Naive thymus-derived CD4-positive, alpha-beta T cell (primary cell): ENCODE measurements at regions of chr6 and their contacts with region 1.

Region 1: GRCh38 chr6:37698261-37699137 is 816 bp upstream of the MDGA1 start:
- DNase-seq: peak; percentile 33 to 69 (median 57)
- ATAC-seq: peak; percentile 23
- H3K4me3 ChIP-seq: peak overlapping the region; percentile 79
- H3K4me3 Mint-ChIP-seq: peak overlapping the region; percentile 96 to 100 (median 98)
- H3K27ac ChIP-seq: peak overlapping the region; percentile 57
- H3K27ac Mint-ChIP-seq: peak overlapping the region; percentile 93 to 99 (median 98)
- H3K4me1 ChIP-seq: peaks cover 11 to 12% of the 10 kb centered on the region in 2 donors
- H3K4me1 Mint-ChIP-seq: peaks cover 20 to 36% (median 26%) of the 10 kb centered on the region in 7 donors
- H3K27me3 ChIP-seq: no peaks in the 10 kb centered on the region
- H3K27me3 Mint-ChIP-seq: peaks cover 25 to 81% (median 38%) of the 10 kb centered on the region in 5 donors

Region 2: DNA sequence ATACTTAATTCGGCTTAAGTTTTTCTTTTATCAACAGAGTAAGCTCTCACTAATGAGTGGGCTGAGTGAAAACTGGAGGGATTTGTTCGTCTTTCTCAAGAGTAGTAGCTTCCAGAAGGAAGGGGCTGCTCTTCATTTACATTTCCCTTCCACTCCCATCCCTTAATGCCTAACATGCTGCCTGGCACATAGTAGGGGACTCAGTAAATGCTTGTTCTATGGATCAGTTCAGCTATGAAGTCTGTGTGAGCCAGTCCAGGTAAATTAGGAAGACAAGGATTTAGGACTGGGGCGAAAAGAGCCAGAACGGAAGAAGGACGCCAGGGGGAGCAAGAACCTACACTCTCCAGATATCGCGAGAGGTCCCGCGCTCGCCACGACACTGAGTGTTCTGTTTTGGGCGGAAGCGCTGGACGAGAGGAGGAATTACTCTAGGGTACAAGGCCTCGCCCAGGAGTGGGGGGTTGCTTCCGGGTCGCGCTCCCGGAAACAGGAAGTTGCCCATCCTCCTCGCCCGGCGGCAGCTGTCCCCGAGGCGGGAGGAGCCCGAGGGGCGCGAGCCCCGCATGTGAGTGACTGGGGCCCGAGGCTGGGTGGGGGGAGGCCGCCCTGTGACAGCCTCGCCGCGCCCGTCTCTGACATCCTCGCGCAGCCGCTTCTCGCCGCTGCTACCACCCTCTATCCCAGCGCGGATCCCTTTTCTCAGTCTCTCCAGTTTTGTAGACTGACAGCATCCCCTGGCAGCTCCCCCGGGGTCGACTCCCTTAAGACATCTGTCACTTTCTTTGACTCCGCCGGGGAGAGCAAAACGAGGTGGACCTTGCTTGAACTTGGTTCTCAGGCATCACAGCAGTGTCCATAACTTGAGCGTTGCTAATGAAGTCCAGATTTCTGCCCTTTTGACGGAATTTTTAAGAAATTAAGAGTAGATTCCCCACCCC is 812.8 kb before region 1 on chr6 and contains the start of gene C6orf89:
- CTCF ChIA-PET with region 1: no interaction called
- POLR2A ChIA-PET with region 1: no interaction called
- intact Hi-C with region 1: loop called in 1 of 2 experiments (anchors 5 kb)
- DNase-seq: peak; percentile 86 to 98 (median 95)
- ATAC-seq: peak; percentile 100
- H3K4me3 ChIP-seq: peak within 1 kb of the TSS; percentile 96
- H3K4me3 Mint-ChIP-seq: peak within 1 kb of the TSS; percentile 83 to 92 (median 90)
- H3K27ac ChIP-seq: peak within 1 kb of the TSS; percentile 81
- H3K27ac Mint-ChIP-seq: peak within 1 kb of the TSS; percentile 90 to 97 (median 95)
- H3K4me1 ChIP-seq: peaks cover 16 to 24% of the 10 kb centered on the region in 2 donors
- H3K4me1 Mint-ChIP-seq: peaks cover 25 to 47% (median 39%) of the 10 kb centered on the region in 7 donors
- H3K27me3 ChIP-seq: no peaks in the 10 kb centered on the region
- H3K27me3 Mint-ChIP-seq: no peaks in the 10 kb centered on the region
- total RNA-seq, gene C6orf89: 34.6 to 48.2 (median 47.7) TPM

Region 3: DNA sequence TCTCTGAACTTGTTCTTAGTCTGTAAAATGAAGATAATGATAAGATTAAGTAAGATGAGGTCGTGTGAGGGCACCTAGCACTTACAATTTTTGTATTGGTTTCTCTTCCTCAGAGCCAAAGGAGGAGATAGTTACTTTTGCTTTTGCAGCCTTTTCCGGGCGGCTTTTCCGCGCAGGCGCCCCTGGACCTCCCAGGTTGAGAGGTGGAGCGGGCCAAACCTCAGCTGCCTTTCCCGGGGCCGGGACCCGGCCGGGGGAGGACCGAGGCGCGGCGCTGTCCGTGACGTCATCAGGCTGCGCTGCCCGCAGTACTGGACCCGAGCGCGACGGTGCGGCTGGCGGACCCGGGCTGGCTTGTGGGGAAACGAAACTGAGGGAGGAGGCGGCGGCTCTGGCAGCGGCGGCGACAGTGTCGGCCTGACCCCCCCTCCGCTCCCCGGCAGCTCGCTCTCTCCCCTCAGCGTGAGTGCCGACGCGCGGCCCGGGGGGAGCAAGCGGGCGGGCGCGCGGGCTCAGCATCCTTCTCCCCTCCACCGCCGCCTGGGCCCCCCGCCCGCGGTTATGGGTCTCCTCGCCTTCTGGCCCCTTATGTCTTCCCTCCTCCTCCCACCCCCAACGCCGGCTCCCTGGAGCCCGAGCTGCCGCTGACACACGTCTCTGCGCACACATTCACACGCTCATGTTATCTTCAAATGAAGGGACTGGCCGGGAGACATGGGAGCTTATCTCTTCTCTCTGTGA is 265.4 kb before region 1 on chr6 and contains the start of gene CMTR1:
- CTCF ChIA-PET with region 1: no interaction called
- POLR2A ChIA-PET with region 1: interaction called, 10 read pairs
- intact Hi-C with region 1: loop called (anchors 2 kb)
- DNase-seq: peak; percentile 94 to 99 (median 95)
- ATAC-seq: peak; percentile 96
- H3K4me3 ChIP-seq: peak within 1 kb of the TSS; percentile 64
- H3K4me3 Mint-ChIP-seq: peak within 1 kb of the TSS; percentile 83 to 96 (median 94)
- H3K27ac ChIP-seq: peak within 1 kb of the TSS; percentile 94
- H3K27ac Mint-ChIP-seq: peak within 1 kb of the TSS; percentile 92 to 97 (median 96)
- H3K4me1 ChIP-seq: peaks cover 12 to 25% of the 10 kb centered on the region in 2 donors
- H3K4me1 Mint-ChIP-seq: peaks cover 24 to 55% (median 47%) of the 10 kb centered on the region in 7 donors
- H3K27me3 ChIP-seq: no peaks in the 10 kb centered on the region
- H3K27me3 Mint-ChIP-seq: peaks cover 2 to 9% (median 8%) of the 10 kb centered on the region in 5 donors
- total RNA-seq, gene CMTR1: 70.0 to 89.4 (median 71.8) TPM

Region 4: GRCh38 chr6:37819177-37819823 is 120.8 kb after region 1 on chr6 and contains the start of gene ZFAND3:
- CTCF ChIA-PET with region 1: no interaction called
- POLR2A ChIA-PET with region 1: interaction called, 14 read pairs
- intact Hi-C with region 1: loop called (anchors 1 to 2 kb)
- DNase-seq: peak; percentile 87 to 96 (median 95)
- ATAC-seq: peak; percentile 90
- H3K4me3 ChIP-seq: peak within 1 kb of the TSS; percentile 85
- H3K4me3 Mint-ChIP-seq: peak within 1 kb of the TSS; percentile 90 to 100 (median 96)
- H3K27ac ChIP-seq: peak within 1 kb of the TSS; percentile 93
- H3K27ac Mint-ChIP-seq: peak within 1 kb of the TSS; percentile 94 to 99 (median 98)
- H3K4me1 ChIP-seq: peaks cover 30 to 31% of the 10 kb centered on the region in 2 donors
- H3K4me1 Mint-ChIP-seq: peaks cover 39 to 66% (median 55%) of the 10 kb centered on the region in 7 donors
- H3K27me3 ChIP-seq: no peaks in the 10 kb centered on the region
- H3K27me3 Mint-ChIP-seq: peaks cover 0 to 29% (median 0%) of the 10 kb centered on the region in 5 donors
- total RNA-seq, gene ZFAND3: 31.7 to 55.0 (median 42.5) TPM

Region 5: DNA sequence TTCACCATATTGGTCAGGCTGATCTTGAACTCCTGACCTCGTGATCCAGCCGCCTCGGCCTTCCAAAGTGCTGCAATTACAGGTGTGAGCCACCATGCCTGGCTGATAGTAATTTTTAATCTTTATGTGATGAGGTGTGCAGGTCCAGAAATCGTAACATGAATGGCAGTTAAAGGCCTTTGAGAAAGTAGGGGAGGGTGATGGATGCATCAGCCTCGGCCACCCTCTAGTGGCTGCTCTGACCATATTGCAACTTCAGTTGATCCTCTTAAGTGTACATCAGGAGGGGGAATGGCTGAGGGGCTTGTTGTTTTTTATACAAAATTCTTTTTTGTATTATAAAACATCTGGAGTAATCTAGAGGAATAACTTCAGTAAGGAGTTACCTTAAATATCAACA is 314.1 kb after region 1 on chr6:
- CTCF ChIA-PET with region 1: no interaction called
- POLR2A ChIA-PET with region 1: no interaction called
- intact Hi-C with region 1: loop called in 1 of 2 experiments (anchors 2 kb)
- DNase-seq: peak in 4 of 9 donors; percentile 3 to 15 (median 12)
- ATAC-seq: peak; percentile 61
- H3K4me3 ChIP-seq: no peak overlapping the region
- H3K4me3 Mint-ChIP-seq: no peak overlapping the region
- H3K27ac ChIP-seq: no peak overlapping the region
- H3K27ac Mint-ChIP-seq: no peak overlapping the region
- H3K4me1 ChIP-seq: no peaks in the 10 kb centered on the region
- H3K4me1 Mint-ChIP-seq: peaks cover 9 to 50% (median 25%) of the 10 kb centered on the region in 7 donors
- H3K27me3 ChIP-seq: no peaks in the 10 kb centered on the region
- H3K27me3 Mint-ChIP-seq: no peaks in the 10 kb centered on the region

Region 6: DNA sequence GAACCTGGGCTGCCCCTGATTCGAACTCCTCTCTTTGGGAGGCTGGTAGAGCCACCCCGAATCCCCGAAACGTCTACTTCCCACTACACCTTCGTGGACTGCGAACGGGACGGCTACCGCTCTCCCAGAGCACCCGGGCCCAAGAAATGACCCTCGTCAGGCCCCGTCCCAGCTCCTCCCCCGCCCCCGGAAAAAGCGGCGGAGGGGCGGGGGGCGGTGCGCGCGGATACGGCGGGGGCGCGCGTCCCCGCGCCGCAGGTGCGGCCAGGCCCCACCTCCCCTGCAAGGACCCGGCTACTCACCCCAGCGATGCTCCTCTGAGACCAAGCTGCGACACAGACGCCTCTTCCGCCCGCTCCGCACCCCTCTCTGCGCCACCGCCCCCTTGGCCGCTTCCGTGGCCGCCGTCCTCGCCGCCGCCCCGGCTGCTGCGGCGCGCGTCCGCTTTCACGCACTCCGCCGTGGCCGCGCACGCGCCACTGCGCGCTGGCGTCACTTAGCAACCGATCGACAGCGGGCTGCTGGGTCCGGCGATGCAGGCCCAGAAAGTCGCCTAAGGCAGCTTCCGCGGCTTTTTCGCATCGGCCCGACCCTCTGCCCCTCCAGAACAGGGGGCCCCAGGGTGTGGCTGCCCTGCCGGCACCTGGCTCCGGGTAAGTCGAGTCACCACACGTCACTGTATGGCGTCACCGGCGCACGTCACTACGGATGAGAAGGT is 941.2 kb after region 1 on chr6 and contains the start of gene BTBD9:
- CTCF ChIA-PET with region 1: no interaction called
- POLR2A ChIA-PET with region 1: no interaction called
- intact Hi-C with region 1: loop called in 1 of 2 experiments (anchors 2 kb)
- DNase-seq: peak; percentile 83 to 92 (median 90)
- ATAC-seq: peak; percentile 87
- H3K4me3 ChIP-seq: peak within 1 kb of the TSS; percentile 90
- H3K4me3 Mint-ChIP-seq: peak within 1 kb of the TSS; percentile 74 to 94 (median 90)
- H3K27ac ChIP-seq: peak within 1 kb of the TSS; percentile 94
- H3K27ac Mint-ChIP-seq: peak within 1 kb of the TSS; percentile 88 to 96 (median 91)
- H3K4me1 ChIP-seq: peaks cover 16 to 22% of the 10 kb centered on the region in 2 donors
- H3K4me1 Mint-ChIP-seq: peaks cover 40 to 65% (median 57%) of the 10 kb centered on the region in 7 donors
- H3K27me3 ChIP-seq: no peaks in the 10 kb centered on the region
- H3K27me3 Mint-ChIP-seq: no peaks in the 10 kb centered on the region
- total RNA-seq, gene BTBD9: 20.6 to 58.8 (median 43.6) TPM